ENCODE measurements at regions of chr3 and their contacts with region 1.

Region 1: GRCh38 chr3:52959773-52960172 is 62.4 kb upstream of the STIMATE start:
- DNase-seq: no peak
- ATAC-seq: no peak
- H3K4me3 ChIP-seq: no peak overlapping the region
- H3K27ac ChIP-seq: no peak overlapping the region
- H3K4me1 ChIP-seq: no peaks in the 10 kb centered on the region
- H3K27me3 ChIP-seq: no peaks in the 10 kb centered on the region
- CTCF ChIP-seq: no peak

Region 2: DNA sequence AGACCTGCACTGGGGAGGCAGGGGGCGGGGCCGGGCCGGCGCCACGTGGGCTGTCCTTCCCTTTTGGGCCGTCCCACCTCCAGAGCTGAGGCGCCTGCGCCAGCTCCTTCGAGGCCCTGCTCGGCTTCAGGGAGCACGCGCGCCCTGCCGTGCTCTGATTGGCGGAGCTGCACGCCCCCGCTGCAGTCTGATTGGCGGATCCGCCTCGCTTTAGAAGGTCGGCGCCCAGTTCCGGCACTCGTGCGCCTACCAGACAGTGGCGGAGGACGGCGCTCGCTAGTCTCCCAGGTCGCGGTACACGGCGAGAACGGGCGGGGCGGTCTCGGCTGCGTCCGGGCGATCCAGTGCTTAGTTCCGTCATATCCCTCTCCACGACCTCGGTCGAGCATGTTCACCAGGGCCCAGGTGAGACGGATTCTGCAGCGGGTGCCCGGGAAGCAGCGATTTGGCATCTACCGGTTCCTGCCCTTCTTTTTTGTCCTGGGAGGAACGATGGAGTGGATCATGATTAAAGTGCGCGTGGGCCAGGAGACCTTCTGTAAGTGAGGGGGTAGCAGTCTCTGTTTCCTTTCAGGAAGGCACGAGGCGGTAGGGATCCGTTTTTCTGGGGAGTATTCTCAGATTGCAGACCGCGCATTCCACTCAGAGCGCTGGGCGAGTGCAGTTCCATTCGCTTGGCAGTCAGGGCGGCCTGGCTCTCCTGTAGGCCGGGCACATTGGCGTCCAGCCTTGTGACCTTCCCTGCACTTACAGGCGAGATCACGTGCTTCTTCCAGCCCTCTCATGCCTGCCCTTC is 423.2 kb before region 1 on chr3 and contains the start of gene UQCC5:
- intact Hi-C with region 1: no loop called
- DNase-seq: peak; percentile 96 to 98
- ATAC-seq: peak; percentile 90 to 96 (median 95)
- H3K4me3 ChIP-seq: peak within 1 kb of the TSS; percentile 46 to 93 (median 71)
- H3K27ac ChIP-seq: peak within 1 kb of the TSS; percentile 82 to 96 (median 92)
- H3K4me1 ChIP-seq: peaks cover 24 to 88% (median 61%) of the 10 kb centered on the region in 9 donors
- H3K27me3 ChIP-seq: no peaks in the 10 kb centered on the region
- CTCF ChIP-seq: peak in 1 of 9 donors; percentile 25
- total RNA-seq, gene UQCC5: 30.2 to 98.0 (median 66.9) TPM

Region 3: DNA sequence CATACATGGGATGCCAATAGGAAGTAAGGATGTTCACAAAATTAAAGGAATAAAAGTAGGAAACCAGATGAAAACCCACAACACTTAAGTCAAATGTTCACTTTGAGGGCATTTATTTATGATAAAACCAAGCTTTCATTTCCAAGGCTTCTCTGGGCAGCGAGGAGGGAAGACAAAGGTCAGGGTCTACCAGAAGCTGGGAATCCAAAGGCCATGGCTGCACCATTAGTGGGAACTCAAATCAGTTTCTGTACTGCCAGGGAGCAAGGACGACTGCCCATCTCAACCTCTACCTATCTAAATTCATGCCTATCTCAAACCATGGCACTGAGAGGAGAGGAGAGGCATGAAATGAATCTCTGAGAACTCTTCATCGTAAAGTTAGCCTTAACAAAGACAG is 296.7 kb before region 1 on chr3:
- intact Hi-C with region 1: no loop called
- DNase-seq: no peak
- ATAC-seq: no peak
- H3K4me3 ChIP-seq: no peak overlapping the region
- H3K27ac ChIP-seq: no peak overlapping the region
- H3K4me1 ChIP-seq: no peaks in the 10 kb centered on the region
- H3K27me3 ChIP-seq: no peaks in the 10 kb centered on the region
- CTCF ChIP-seq: no peak

Region 4: DNA sequence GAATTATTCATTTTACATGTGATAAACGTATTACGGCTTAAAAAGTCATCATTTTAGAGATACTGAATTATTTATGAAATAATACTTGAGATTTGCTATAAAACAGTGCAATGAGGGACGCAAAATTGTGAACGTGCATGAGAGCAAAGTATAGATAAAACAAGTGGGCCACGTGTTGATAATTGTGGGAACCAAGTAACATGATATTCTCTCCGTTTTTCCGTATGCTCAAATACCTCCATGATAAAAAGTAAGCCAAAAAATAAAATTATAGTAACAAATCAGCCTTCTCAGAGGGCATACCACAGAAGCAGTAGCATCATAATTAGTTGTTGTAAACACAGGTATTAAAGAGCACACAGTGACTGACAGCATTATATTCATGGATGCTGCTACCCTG is 43.5 kb after region 1 on chr3:
- intact Hi-C with region 1: loop called in 1 of 10 experiments (anchors 2 kb)
- DNase-seq: no peak
- ATAC-seq: no peak
- H3K4me3 ChIP-seq: no peak overlapping the region
- H3K27ac ChIP-seq: no peak overlapping the region
- H3K4me1 ChIP-seq: peaks cover 0 to 3% (median 0%) of the 10 kb centered on the region in 9 donors
- H3K27me3 ChIP-seq: no peaks in the 10 kb centered on the region
- CTCF ChIP-seq: no peak

Region 5: DNA sequence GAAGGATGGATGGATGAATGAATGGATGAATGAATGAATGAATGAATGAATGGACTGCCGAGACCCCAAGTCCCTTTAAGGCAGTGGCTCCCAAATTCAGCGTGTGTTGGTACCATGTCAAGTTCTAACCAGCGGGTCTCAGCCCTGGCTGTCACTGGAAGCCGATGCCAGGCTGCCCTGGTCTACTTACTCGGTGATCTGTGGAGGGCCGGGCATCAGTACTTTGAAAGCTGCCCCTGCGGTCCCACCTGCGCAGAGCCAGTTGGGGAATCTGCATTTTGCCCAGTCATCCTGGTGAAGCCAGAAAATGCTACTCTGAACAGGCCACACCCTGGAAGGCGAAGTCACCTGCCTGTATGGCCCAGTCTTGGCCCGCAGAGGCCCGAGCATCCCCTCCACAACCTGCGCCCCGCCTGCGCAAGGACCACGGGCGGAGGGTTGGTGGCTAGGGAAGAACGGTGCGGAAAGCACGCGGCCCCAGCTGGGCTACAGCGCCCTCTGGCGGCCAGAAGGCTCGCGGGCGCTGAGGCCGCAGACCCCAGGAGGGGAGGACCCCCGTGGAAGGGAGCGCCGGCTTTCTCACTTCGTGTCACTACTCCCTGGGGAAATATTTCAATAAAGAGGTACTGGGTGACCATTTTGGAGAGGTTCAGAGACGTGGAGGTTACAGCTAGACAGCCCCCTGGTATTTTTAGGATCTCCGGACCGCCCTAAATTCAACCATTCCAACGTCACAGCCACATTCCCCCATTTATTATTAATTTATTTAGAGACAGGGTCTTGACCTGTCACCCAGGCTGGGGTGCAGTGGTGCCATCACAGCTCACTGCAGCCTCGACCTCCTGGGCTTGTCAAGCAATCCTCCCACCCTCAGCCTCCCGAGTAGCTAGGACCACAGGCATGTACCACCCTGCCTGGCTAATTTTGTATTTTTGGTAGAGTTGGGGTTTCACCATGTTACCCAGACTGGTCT is 236.1 kb after region 1 on chr3:
- intact Hi-C with region 1: no loop called
- DNase-seq: peak in 1 of 2 donors; percentile 62
- ATAC-seq: peak; percentile 70 to 85 (median 78)
- H3K4me3 ChIP-seq: no peak overlapping the region
- H3K27ac ChIP-seq: peak overlapping the region in 1 of 10 donors; percentile 8
- H3K4me1 ChIP-seq: peaks cover 10 to 46% (median 28%) of the 10 kb centered on the region in 9 donors
- H3K27me3 ChIP-seq: no peaks in the 10 kb centered on the region
- CTCF ChIP-seq: peak; percentile 98 to 100 (median 99)